Activated CD4-positive, alpha-beta T cell treated with anti-CD3 and anti-CD28 coated beads, Interleukin-2, amount 10 ng/mL, durations not matched to agents 24 days and 14 days (primary cell): ENCODE measurements at regions of chr12 and their contacts with region 1.

Region 1: GRCh38 chr12:24728366-24728765 is 220.5 kb downstream of the BCAT1 start:
- DNase-seq: no peak
- H3K4me3 Mint-ChIP-seq: no peak overlapping the region
- H3K27ac Mint-ChIP-seq: no peak overlapping the region
- H3K4me1 Mint-ChIP-seq: peaks cover 24% of the 10 kb centered on the region
- H3K27me3 Mint-ChIP-seq: no peaks in the 10 kb centered on the region

Region 2: GRCh38 chr12:24297516-24297915 is 430.9 kb before region 1 on chr12:
- intact Hi-C with region 1: no loop called
- DNase-seq: no peak
- H3K4me3 Mint-ChIP-seq: no peak overlapping the region
- H3K27ac Mint-ChIP-seq: no peak overlapping the region
- H3K4me1 Mint-ChIP-seq: no peaks in the 10 kb centered on the region
- H3K27me3 Mint-ChIP-seq: no peaks in the 10 kb centered on the region

Region 3: DNA sequence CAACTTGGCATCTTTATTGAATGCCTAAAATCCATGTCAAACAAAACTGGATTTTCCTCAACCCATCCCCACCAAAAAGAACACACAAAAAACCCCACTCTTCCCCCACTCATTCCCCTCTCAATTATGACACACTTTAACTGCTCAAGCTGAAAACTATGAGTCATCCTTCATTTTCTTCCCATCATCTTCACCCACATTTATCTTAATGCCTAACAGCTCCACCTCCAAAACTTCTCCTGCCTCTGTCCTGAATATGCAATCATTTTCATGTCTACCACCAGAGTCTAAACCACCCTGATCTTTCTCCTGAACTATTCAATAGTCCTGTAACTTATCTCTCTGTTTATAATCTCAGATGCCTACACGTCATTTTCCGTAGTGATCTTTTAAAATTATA is 19.1 kb before region 1 on chr12:
- intact Hi-C with region 1: loop called (anchors 2 kb)
- DNase-seq: no peak
- H3K4me3 Mint-ChIP-seq: no peak overlapping the region
- H3K27ac Mint-ChIP-seq: no peak overlapping the region
- H3K4me1 Mint-ChIP-seq: peaks cover 10% of the 10 kb centered on the region
- H3K27me3 Mint-ChIP-seq: no peaks in the 10 kb centered on the region

Region 4: GRCh38 chr12:24767016-24767415 is 38.6 kb after region 1 on chr12:
- intact Hi-C with region 1: loop called (anchors 2 kb)
- DNase-seq: no peak
- H3K4me3 Mint-ChIP-seq: no peak overlapping the region
- H3K27ac Mint-ChIP-seq: peak overlapping the region; percentile 55
- H3K4me1 Mint-ChIP-seq: peaks cover 4% of the 10 kb centered on the region
- H3K27me3 Mint-ChIP-seq: no peaks in the 10 kb centered on the region

Region 5: GRCh38 chr12:24902511-24903328 is 174.4 kb after region 1 on chr12:
- intact Hi-C with region 1: loop called (anchors 10 kb)
- DNase-seq: peak; percentile 85
- H3K4me3 Mint-ChIP-seq: peak overlapping the region; percentile 98
- H3K27ac Mint-ChIP-seq: peak overlapping the region; percentile 98
- H3K4me1 Mint-ChIP-seq: peaks cover 35% of the 10 kb centered on the region
- H3K27me3 Mint-ChIP-seq: peaks cover 4% of the 10 kb centered on the region